Gastrocnemius medialis (tissue), 4 donors: ENCODE measurements at regions of chr20 and their contacts with region 1.

Region 1: GRCh38 chr20:49685809-49686208 is 27.9 kb downstream of the B4GALT5 start:
- DNase-seq: no peak
- ATAC-seq: peak in 1 of 2 donors; percentile 48
- H3K4me3 ChIP-seq: no peak overlapping the region
- H3K27ac ChIP-seq: peak overlapping the region; percentile 78 to 91 (median 82)
- H3K4me1 ChIP-seq: peaks cover 84 to 92% of the 10 kb centered on the region in 2 donors
- H3K27me3 ChIP-seq: no peaks in the 10 kb centered on the region
- CTCF ChIP-seq: no peak
- POLR2A ChIP-seq: no peak

Region 2: DNA sequence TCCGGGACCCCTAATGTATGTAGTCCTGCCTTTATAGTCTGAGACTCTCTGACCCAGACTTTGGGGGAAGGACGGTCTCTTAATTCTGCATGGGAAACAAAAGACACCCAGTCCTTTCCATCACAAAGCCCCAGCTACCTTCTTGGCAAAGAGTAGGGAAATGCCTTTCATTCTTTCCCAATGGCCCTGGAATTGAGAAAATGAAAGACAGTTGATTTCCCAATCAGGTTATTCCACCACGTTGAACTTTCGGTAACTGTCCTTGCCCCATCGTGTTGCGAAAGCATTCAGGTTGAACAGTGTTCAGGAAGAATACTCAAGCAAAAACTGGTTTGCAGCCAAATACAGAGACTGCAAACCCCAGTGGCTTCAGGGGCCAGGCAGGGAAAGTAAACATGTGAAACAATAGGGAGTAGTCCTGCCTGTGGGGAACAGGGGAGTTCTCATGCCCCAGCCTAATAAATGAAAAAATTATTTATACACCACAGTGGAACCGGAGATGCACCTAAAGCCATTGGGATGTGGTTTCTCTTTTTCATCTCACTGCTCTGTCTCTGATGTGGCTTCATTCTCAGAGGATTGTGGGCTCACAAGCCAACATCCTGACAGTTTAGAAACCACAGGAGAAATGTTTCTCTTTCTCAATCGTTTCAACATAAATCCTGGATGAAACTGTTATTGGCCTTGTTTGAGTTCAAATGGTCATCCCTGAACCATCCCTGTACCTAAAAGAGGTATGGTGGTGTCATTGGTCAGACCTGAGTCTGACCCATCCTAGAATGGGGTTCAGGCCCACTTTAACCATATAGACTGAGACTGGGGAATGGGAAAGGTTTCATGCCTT is 82.6 kb after region 1 on chr20:
- in situ Hi-C with region 1: no loop called
- intact Hi-C with region 1: loop called (anchors 5 kb)
- DNase-seq: peak; percentile 70 to 87
- ATAC-seq: peak; percentile 70 to 77
- H3K4me3 ChIP-seq: no peak overlapping the region
- H3K27ac ChIP-seq: peak overlapping the region; percentile 82 to 90 (median 86)
- H3K4me1 ChIP-seq: peaks cover 34 to 61% of the 10 kb centered on the region in 2 donors
- H3K27me3 ChIP-seq: no peaks in the 10 kb centered on the region
- CTCF ChIP-seq: no peak
- POLR2A ChIP-seq: no peak

Region 3: DNA sequence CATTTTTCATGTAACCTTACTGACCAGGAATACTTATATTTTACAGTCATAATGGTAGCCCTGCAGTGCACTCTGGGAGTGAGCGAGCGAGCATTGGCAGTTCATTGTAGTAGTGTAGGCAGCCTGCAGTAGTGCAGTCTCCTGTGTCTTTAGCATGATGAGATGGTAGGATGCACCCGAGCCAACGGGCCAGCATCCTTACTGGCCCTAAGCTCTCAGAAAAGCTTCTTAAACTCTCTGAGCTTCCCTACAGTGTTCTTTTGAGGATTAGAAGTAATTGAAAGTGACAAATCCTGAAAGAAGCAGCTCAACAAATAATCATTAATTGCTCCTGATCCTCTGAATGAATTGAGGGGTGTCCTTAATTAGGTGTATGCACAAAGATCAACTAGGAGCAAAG is 147.7 kb after region 1 on chr20:
- in situ Hi-C with region 1: no loop called
- intact Hi-C with region 1: no loop called
- DNase-seq: no peak
- ATAC-seq: no peak
- H3K4me3 ChIP-seq: no peak overlapping the region
- H3K27ac ChIP-seq: no peak overlapping the region
- H3K4me1 ChIP-seq: no peaks in the 10 kb centered on the region
- H3K27me3 ChIP-seq: no peaks in the 10 kb centered on the region
- CTCF ChIP-seq: no peak
- POLR2A ChIP-seq: no peak

Region 4: GRCh38 chr20:49888345-49888966 is 202.6 kb after region 1 on chr20:
- in situ Hi-C with region 1: no loop called
- intact Hi-C with region 1: no loop called
- DNase-seq: peak in 1 of 2 donors; percentile 56
- ATAC-seq: peak; percentile 37 to 67
- H3K4me3 ChIP-seq: no peak overlapping the region
- H3K27ac ChIP-seq: peak overlapping the region; percentile 49 to 72 (median 67)
- H3K4me1 ChIP-seq: peaks cover 24 to 26% of the 10 kb centered on the region in 2 donors
- H3K27me3 ChIP-seq: no peaks in the 10 kb centered on the region
- CTCF ChIP-seq: peak; percentile 66 to 82 (median 76)
- POLR2A ChIP-seq: no peak